SK-N-SH (cell line): ENCODE measurements at regions of chr4 and their contacts with region 1.

Region 1: GRCh38 chr4:118034053-118034785 is at the start of gene NDST3:
- DNase-seq: peak; percentile 81
- H3K4me3 ChIP-seq: peak within 1 kb of the TSS; percentile 74 to 80
- H3K27ac ChIP-seq: peak within 1 kb of the TSS in 1 of 2 experiments; percentile 50; a peak in 1 of 4 replicates
- H3K4me1 ChIP-seq: peaks cover 0 to 2% of the 10 kb centered on the region in 2 experiments; a peak in 2 of 4 replicates
- H3K27me3 ChIP-seq: no peaks in the 10 kb centered on the region
- CTCF ChIP-seq: peak; percentile 66
- EP300 ChIP-seq: 0 out of 4 replicates have a peak, but pooled peaks of 1 of the 2 experiments have one; percentile 19
- RAD21 ChIP-seq: peak; percentile 99
- polyA plus RNA-seq, gene NDST3: 1.2 and 1.4 TPM in 2 replicates

Region 2: GRCh38 chr4:116180157-116180601 is 1854.0 kb before region 1 on chr4:
- CTCF ChIA-PET with region 1: interaction called, 38 read pairs
- POLR2A ChIA-PET with region 1: no interaction called
- DNase-seq: peak; percentile 24
- H3K4me3 ChIP-seq: peak overlapping the region in 1 of 2 experiments; percentile 46; a peak in 1 of 4 replicates
- H3K27ac ChIP-seq: no peak overlapping the region
- H3K4me1 ChIP-seq: peaks cover 0 to 9% of the 10 kb centered on the region in 2 experiments; a peak in 2 of 4 replicates
- H3K27me3 ChIP-seq: no peaks in the 10 kb centered on the region
- CTCF ChIP-seq: peak; percentile 62
- EP300 ChIP-seq: no peak
- RAD21 ChIP-seq: peak; percentile 86

Region 3: GRCh38 chr4:117971403-117971802 is 62.8 kb before region 1 on chr4:
- CTCF ChIA-PET with region 1: no interaction called
- POLR2A ChIA-PET with region 1: no interaction called
- DNase-seq: no peak
- H3K4me3 ChIP-seq: no peak overlapping the region
- H3K27ac ChIP-seq: no peak overlapping the region; a peak in 1 of 4 replicates
- H3K4me1 ChIP-seq: no peaks in the 10 kb centered on the region; a peak in 1 of 4 replicates
- H3K27me3 ChIP-seq: no peaks in the 10 kb centered on the region
- CTCF ChIP-seq: no peak
- EP300 ChIP-seq: no peak
- RAD21 ChIP-seq: no peak

Region 4: DNA sequence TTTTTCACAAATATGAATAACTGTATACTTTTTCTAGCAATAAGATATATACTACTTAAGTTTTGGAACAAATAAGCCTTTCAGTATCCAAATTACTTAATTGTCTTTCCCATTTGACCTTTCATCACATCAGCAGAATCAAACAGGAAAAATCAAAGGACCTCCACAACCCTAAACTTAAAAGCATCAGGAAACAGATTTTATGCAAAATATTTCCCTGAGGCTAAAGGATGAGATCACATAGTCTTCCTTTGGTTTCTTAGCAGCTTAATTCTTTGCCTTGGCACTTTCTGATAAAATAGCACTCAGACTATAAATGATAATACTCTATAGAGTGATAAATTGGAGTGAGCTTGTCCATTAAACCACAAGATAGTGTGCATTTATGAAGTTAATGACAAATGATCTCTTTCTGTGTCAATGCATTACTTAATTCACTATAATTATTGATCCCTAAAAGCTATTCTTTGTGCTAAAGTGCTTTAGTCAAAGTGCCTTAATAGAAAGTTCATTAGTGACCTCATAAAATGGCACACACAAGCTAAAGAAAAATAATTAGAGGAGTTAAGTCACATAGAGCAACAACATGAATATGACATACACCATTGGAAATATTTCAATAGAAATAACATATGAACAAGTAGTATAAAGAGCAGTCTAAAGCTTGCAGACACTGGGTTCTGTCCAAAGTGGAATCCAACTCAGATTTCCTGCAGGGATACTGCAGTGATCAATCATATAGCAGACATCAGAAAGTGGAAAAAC is 15.7 kb before region 1 on chr4:
- CTCF ChIA-PET with region 1: interaction called, 10 read pairs
- POLR2A ChIA-PET with region 1: no interaction called
- DNase-seq: no peak
- H3K4me3 ChIP-seq: no peak overlapping the region
- H3K27ac ChIP-seq: no peak overlapping the region
- H3K4me1 ChIP-seq: no peaks in the 10 kb centered on the region; a peak in 1 of 4 replicates
- H3K27me3 ChIP-seq: no peaks in the 10 kb centered on the region
- CTCF ChIP-seq: no peak
- EP300 ChIP-seq: no peak
- RAD21 ChIP-seq: no peak

Region 5: GRCh38 chr4:118124997-118125396 is 90.8 kb after region 1 on chr4:
- CTCF ChIA-PET with region 1: no interaction called
- POLR2A ChIA-PET with region 1: no interaction called
- DNase-seq: no peak
- H3K4me3 ChIP-seq: no peak overlapping the region
- H3K27ac ChIP-seq: no peak overlapping the region
- H3K4me1 ChIP-seq: no peaks in the 10 kb centered on the region; a peak in 1 of 4 replicates
- H3K27me3 ChIP-seq: no peaks in the 10 kb centered on the region
- CTCF ChIP-seq: no peak
- EP300 ChIP-seq: no peak
- RAD21 ChIP-seq: no peak

Region 6: DNA sequence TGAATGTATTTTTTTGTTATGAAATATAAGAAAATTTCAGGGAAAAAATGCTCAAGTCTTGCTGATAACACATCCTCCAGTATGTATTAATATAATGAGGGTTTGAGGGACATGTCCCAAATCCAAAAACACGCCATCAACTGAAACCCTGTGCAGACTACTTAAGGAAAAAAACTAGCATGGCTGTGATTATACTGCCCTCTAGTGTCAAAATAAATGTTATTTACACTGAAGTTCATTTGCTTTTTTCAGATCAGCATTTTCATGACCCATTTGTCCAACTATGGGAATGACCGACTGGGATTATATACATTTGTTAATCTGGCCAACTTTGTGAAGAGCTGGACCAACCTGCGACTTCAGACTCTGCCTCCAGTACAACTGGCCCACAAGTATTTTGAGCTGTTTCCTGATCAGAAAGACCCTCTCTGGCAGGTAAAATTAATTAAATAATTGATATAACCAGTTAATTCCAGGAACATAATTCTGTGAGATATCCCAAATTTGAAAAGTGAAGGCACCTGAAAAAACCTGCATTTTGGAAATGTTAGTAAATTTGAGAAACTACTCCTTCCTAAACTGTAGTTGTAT is 190.1 kb after region 1 on chr4:
- CTCF ChIA-PET with region 1: interaction called, 33 read pairs
- POLR2A ChIA-PET with region 1: no interaction called
- DNase-seq: peak; percentile 30
- H3K4me3 ChIP-seq: peak overlapping the region in 1 of 2 experiments; percentile 14; a peak in 1 of 4 replicates
- H3K27ac ChIP-seq: no peak overlapping the region
- H3K4me1 ChIP-seq: no peaks in the 10 kb centered on the region; a peak in 2 of 4 replicates
- H3K27me3 ChIP-seq: no peaks in the 10 kb centered on the region
- CTCF ChIP-seq: peak; percentile 75
- EP300 ChIP-seq: no peak
- RAD21 ChIP-seq: peak; percentile 90